CD4-positive, alpha-beta T cell (primary cell): ENCODE measurements at regions of chr6 and their contacts with region 1.

Region 1: DNA sequence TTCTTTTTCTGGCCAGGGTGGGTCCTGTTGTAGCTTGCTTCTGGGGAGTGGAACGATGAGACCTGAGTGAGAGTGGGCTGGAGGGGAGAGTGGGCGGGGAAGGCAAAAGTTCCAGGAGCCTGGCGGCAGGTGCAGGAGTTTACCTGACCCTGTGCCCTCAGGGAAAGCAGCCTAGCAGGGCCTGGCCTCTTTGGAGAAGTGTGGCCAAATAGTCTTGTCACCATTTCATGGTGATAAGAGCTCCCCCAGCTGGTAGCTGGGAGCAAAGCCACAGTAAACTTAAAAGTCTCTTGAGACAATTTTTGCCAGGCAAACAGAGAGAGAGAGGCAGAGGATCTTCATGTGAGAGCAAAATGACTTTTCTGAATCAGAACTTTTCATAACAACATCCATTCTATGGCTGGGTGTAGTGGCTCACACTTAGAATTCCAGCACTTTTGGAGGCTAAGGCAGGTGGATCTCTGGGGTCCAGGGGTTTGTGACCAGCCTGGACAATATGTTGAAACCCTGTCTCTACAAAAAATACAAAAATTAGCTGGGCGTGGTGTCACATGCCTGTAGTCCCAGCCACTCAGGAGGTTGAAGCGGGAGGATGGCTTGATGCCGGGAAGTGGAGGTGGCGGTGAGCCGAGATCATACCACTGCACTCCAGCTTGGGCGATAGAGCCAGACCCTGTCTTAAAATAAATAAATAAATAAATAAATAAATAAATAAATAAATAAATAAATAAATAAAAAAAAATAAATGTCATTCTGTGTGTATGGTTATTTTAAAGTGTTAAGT is 161.8 kb upstream of the SCGN start:
- DNase-seq: peak; percentile 39 to 82 (median 58)
- ATAC-seq: peak; percentile 82
- H3K4me3 ChIP-seq: no peak overlapping the region
- H3K4me3 Mint-ChIP-seq: no peak overlapping the region
- H3K27ac ChIP-seq: no peak overlapping the region
- H3K27ac Mint-ChIP-seq: peak overlapping the region; percentile 8
- H3K4me1 ChIP-seq: peaks cover 7% of the 10 kb centered on the region
- H3K4me1 Mint-ChIP-seq: peaks cover 8% of the 10 kb centered on the region
- H3K27me3 ChIP-seq: no peaks in the 10 kb centered on the region
- H3K27me3 Mint-ChIP-seq: no peaks in the 10 kb centered on the region
- CTCF ChIP-seq: peak; percentile 88

Region 2: GRCh38 chr6:25342802-25343201 is 147.4 kb before region 1 on chr6:
- CTCF ChIA-PET with region 1: no interaction called
- POLR2A ChIA-PET with region 1: no interaction called
- intact Hi-C with region 1: loop called in 1 of 2 experiments (anchors 5 kb)
- DNase-seq: no peak
- ATAC-seq: no peak
- H3K4me3 ChIP-seq: no peak overlapping the region
- H3K4me3 Mint-ChIP-seq: no peak overlapping the region
- H3K27ac ChIP-seq: no peak overlapping the region
- H3K27ac Mint-ChIP-seq: no peak overlapping the region
- H3K4me1 ChIP-seq: no peaks in the 10 kb centered on the region
- H3K4me1 Mint-ChIP-seq: peaks cover 17% of the 10 kb centered on the region
- H3K27me3 ChIP-seq: no peaks in the 10 kb centered on the region
- H3K27me3 Mint-ChIP-seq: no peaks in the 10 kb centered on the region
- CTCF ChIP-seq: no peak

Region 3: DNA sequence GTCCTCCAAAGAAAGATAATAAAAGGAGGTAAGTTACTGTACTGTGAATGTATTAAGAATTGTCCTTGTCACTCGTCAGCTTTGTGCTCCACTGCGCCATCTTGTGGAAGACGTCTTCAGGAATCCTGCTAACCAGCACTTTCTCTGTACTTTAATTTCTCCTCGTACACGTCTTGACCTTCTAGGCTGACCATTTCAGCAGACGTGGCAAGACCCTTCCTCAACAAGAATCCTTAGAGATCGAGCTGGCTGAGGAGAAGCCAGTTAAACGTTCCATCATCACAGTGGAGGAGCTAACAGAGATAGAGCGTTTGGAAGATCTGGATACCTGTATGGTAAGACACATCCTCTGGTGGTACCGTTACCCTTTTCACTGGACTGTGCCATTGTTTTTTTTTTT is 66.3 kb after region 1 on chr6:
- CTCF ChIA-PET with region 1: interaction called, 5 read pairs
- POLR2A ChIA-PET with region 1: no interaction called
- intact Hi-C with region 1: loop called in 1 of 2 experiments (anchors 5 kb)
- DNase-seq: peak; percentile 60 to 85 (median 74)
- ATAC-seq: no peak
- H3K4me3 ChIP-seq: no peak overlapping the region
- H3K4me3 Mint-ChIP-seq: no peak overlapping the region
- H3K27ac ChIP-seq: no peak overlapping the region
- H3K27ac Mint-ChIP-seq: no peak overlapping the region
- H3K4me1 ChIP-seq: no peaks in the 10 kb centered on the region
- H3K4me1 Mint-ChIP-seq: no peaks in the 10 kb centered on the region
- H3K27me3 ChIP-seq: no peaks in the 10 kb centered on the region
- H3K27me3 Mint-ChIP-seq: no peaks in the 10 kb centered on the region
- CTCF ChIP-seq: peak; percentile 87

Region 4: GRCh38 chr6:25601800-25602673 is 111.8 kb after region 1 on chr6:
- CTCF ChIA-PET with region 1: no interaction called
- POLR2A ChIA-PET with region 1: no interaction called
- intact Hi-C with region 1: loop called (anchors 1 to 5 kb)
- DNase-seq: peak in 3 of 14 experiments; percentile 55 to 75 (median 69)
- ATAC-seq: no peak
- H3K4me3 ChIP-seq: no peak overlapping the region
- H3K4me3 Mint-ChIP-seq: no peak overlapping the region
- H3K27ac ChIP-seq: no peak overlapping the region
- H3K27ac Mint-ChIP-seq: no peak overlapping the region
- H3K4me1 ChIP-seq: no peaks in the 10 kb centered on the region
- H3K4me1 Mint-ChIP-seq: peaks cover 5% of the 10 kb centered on the region
- H3K27me3 ChIP-seq: no peaks in the 10 kb centered on the region
- H3K27me3 Mint-ChIP-seq: no peaks in the 10 kb centered on the region
- CTCF ChIP-seq: peak; percentile 81